GM12878 (cell line): ENCODE measurements at regions of chr13 and their contacts with region 1.

Region 1: DNA sequence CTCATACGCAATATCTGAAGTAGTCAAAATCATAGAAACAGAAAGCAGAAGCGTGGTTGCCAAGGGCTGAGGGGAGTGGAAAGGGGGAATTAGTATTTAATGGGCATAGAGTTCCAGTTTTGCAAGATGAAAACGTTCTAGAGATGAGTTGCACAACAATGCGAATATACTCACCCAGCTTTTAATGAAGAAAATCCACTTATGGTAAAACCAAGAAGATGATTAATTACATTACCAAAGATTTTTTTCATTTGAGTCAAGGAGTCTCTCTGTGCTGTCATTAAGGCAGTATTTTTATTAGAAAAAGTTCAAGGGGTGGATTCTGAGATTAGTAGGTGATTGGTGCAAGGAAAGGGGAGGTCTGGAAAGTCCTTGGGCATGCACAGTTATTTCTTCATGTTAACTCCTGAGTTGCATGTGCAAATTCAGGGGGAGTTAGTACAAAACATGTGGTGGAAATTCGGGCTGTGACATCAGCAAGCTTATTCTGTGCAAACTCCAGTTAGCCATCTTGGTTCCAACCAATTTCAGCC is 6.9 kb upstream of the CBY2 start:
- DNase-seq: peak; percentile 68
- ATAC-seq: peak; percentile 66
- H3K4me3 ChIP-seq: peak overlapping the region; percentile 66
- H3K27ac ChIP-seq: peak overlapping the region; percentile 98
- H3K4me1 ChIP-seq: peaks cover 14% of the 10 kb centered on the region
- H3K27me3 ChIP-seq: no peaks in the 10 kb centered on the region
- CTCF ChIP-seq: no peak
- EP300 ChIP-seq: peak in 1 of 2 experiments; percentile 57; a peak in 1 of 4 replicates
- POLR2A ChIP-seq: 0 out of 2 replicates have a peak, but pooled peaks have one; percentile 23
- RAD21 ChIP-seq: no peak

Region 2: GRCh38 chr13:45683701-45684100 is 11.6 kb before region 1 on chr13:
- CTCF ChIA-PET with region 1: interaction called, 25 read pairs
- POLR2A ChIA-PET with region 1: interaction called, 3 read pairs
- RAD21 ChIA-PET with region 1: interaction called, 8 read pairs
- SMC1A ChIA-PET with region 1: interaction called, 11 read pairs
- in situ Hi-C with region 1: no loop called
- intact Hi-C with region 1: no loop called
- DNase-seq: no peak
- ATAC-seq: peak; percentile 63
- H3K4me3 ChIP-seq: no peak overlapping the region
- H3K27ac ChIP-seq: no peak overlapping the region
- H3K4me1 ChIP-seq: no peaks in the 10 kb centered on the region
- H3K27me3 ChIP-seq: no peaks in the 10 kb centered on the region
- CTCF ChIP-seq: peak; percentile 27 to 36 (median 31); a peak in 4 of 6 replicates
- EP300 ChIP-seq: no peak
- POLR2A ChIP-seq: no peak
- RAD21 ChIP-seq: no peak